Right ventricle myocardium inferior (tissue), 1 donor: ENCODE measurements at regions of chr15 and their contacts with region 1.

Region 1: DNA sequence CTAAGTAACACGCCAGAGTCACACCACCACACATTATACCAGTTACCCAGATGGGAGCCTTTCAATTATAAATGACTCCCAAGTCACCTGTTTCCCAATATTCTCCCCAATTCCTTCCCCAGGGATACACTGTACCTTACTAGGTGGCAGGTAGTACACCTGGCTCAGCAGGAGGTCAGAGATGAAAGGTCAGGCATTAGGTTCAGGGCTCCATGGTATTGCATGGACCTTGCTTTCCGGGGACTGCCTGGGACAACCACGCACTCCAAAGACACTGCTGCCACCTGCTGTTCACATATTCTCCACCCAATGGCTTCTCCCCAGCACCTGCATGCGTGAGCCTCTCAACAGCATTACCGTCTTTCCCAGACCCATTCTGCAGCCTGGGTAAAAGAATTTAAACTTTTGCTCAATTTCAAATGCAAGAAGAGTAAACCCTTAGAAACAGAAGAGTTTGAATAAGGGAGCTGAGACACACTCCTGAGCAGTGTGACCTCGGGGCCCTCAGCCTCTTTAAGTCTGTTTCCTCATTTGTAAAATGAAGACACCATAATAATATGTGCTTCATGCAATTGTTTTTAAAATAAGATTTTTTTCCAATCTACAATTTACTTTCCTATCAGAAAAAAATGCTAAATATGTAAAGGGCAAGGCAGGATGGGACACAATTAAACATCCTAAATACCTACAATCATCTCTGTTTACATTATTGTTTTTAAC is 28.0 kb upstream of the LACTB start:
- DNase-seq: peak; percentile 77
- ATAC-seq: peak; percentile 94

Region 2: DNA sequence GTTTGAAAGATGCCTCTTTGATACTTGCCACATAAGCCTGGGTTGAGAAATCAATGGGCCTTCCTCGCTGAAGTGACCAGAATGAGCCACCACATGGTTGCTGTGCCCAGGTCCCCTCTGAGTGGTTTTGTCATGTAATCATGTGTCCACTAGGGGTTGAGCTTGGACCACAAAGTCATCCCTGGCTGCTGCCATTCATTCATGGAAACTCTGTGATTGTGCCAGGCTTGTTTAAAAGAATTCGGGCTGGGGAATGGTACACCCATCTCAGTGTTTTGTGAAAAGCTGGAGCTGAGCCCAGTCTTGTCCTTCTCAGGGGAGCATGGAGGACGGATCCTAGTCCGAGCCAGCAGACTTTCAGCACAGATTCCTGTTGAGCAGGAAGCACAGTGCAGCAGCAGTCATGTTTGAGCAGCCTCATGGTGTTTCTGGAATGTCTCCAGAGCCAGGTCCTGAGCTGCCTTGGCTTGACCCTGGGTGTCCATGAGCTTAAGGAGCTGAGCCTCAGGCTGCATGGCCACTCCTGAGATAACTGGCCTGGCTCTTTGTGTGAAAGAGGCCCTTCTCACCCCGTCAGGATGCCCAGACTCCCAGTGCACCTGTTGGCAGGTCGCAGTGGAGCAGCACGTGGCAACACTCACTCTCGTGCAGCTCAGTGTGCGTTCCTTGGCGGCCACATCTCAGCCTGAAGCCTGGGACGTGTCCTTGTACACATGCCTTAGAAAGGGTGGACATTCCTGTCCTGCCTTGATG is 311.4 kb before region 1 on chr15:
- intact Hi-C with region 1: loop called (anchors 1 kb)
- DNase-seq: peak; percentile 80
- ATAC-seq: peak; percentile 92

Region 3: GRCh38 chr15:62847900-62848489 is 245.7 kb before region 1 on chr15:
- intact Hi-C with region 1: loop called (anchors 1 kb)
- DNase-seq: peak; percentile 80
- ATAC-seq: peak; percentile 73

Region 4: GRCh38 chr15:63048115-63048775 is 45.4 kb before region 1 on chr15:
- intact Hi-C with region 1: loop called (anchors 1 kb)
- DNase-seq: peak; percentile 96
- ATAC-seq: peak; percentile 82

Region 5: GRCh38 chr15:63218100-63218808 is 124.6 kb after region 1 on chr15:
- intact Hi-C with region 1: no loop called
- DNase-seq: no peak
- ATAC-seq: peak; percentile 64